ENCODE measurements at regions of chr7 and their contacts with region 1.

Region 1: DNA sequence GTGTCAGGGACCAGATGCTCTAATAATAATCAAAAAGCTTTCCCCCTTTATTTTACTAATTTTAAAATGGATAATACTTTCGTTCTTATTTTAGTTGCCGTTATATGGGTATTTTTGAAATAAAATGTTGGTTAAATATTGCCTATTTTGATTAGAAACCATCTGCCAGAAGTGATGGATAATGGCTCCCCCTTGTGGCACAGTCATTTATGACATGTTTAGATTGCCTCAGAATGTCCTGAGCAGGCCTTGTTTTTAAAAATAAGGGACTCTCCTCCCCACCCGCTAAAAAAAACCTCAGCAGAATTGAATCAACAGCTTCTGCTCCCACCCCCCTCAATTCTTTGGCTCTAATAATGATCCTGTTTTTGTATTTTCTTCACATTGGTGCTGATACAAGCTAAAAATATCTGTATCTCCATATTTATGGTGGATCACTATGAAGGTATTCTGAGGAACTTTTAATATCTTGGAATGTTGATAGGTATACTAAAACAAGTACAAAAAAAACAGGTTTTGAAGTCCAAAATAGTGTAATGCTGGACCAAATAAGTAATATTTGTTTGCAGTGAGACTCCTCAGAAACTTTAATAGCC is 38.8 kb downstream of the TMEM60 start:
- ATAC-seq: peak in 6 of 8 experiments; percentile 40 to 75 (median 52)
- H3K4me3 ChIP-seq: no peak overlapping the region
- H3K27ac ChIP-seq: no peak overlapping the region
- H3K4me1 ChIP-seq: no peaks in the 10 kb centered on the region

Region 2: DNA sequence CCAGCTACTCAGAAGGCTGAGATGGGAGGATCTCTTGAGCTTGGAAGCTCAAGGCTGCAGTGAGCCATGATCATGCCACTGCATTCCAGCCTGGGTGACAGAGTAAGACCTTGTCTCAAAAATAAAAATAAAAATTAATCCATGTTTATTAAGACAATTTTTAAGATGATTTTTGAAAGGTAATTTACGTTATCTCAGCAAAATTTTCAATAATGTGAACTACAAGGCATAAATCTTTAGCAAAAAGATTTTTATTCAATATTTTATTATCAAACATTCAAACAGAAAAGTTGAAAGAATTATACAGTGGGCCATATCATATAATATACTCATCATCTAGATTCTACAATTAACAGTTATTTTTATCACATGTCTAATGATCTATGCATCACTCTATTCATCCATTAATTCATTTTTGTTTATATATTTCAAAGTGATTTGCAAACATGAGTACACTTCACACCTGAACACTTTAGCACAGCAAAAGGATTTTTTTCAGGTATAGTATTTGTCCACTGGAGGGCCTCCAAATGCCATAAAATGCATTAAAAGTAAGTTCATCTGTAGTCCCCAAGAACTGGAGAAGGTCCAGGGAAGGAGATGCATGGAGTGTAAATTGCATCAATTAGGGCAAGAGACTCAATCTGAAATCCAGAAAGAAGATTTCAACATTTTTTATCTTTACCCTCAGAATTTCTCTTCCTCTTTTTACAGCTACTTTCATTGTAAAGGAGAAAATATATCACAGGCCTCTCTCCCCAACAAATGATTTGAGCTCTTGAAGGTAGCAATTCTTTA is 101.8 kb before region 1 on chr7:
- in situ Hi-C with region 1: loop called in 6 of 9 experiments (anchors 25 kb)
- ATAC-seq: peak in 6 of 8 experiments; percentile 35 to 68 (median 51)
- H3K4me3 ChIP-seq: no peak overlapping the region
- H3K27ac ChIP-seq: no peak overlapping the region
- H3K4me1 ChIP-seq: no peaks in the 10 kb centered on the region

Region 3: GRCh38 chr7:77684030-77684429 is 75.4 kb before region 1 on chr7:
- in situ Hi-C with region 1: no loop called
- ATAC-seq: peak in 7 of 8 experiments; percentile 66 to 100 (median 98)
- H3K4me3 ChIP-seq: no peak overlapping the region
- H3K27ac ChIP-seq: no peak overlapping the region
- H3K4me1 ChIP-seq: peaks cover 4 to 6% of the 10 kb centered on the region in 2 donors

Region 4: GRCh38 chr7:78368771-78369170 is 609.4 kb after region 1 on chr7:
- in situ Hi-C with region 1: no loop called
- ATAC-seq: no peak
- H3K4me3 ChIP-seq: no peak overlapping the region
- H3K27ac ChIP-seq: no peak overlapping the region
- H3K4me1 ChIP-seq: no peaks in the 10 kb centered on the region

Measured in motor neuron (in vitro differentiated cells).